ENCODE measurements at regions of chr14 and their contacts with region 1.

Region 1: DNA sequence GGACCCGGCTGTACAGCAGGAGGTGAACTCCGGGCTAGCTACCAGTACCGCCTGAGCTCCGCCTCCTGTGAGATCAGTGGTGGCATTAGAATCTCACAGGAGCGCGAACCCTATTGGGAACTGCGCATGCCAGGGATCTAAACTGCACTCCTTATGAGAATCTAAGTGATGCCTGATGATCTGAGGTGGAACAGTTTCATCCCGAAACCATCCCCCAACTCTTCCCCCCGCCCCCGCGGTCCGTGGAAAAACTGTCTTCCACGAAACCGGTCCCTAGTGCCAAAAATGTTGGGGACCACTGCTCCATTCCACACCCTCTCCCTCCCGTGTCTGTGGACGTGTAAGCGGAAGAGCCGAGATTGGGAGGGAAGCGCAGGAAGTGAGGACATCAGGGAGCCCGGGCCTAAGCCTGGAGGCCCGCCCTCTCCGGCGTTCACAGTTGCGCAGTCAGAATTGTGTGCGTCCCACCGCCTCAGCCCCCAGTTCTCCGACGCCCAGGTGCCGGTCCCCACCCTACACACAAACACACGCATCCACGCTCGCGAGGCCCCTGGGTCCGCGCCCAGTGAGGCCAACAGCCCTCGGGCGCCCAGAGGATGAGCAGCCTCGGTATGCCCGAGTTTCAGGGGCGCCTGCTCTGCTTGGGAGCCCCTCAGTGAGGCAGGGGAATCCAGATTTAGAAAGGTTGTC is 1.8 kb upstream of the RNASE4 start:
- DNase-seq: peak; percentile 78
- H3K4me3 Mint-ChIP-seq: no peak overlapping the region
- H3K27ac Mint-ChIP-seq: no peak overlapping the region
- H3K4me1 Mint-ChIP-seq: peaks cover 13% of the 10 kb centered on the region
- H3K27me3 Mint-ChIP-seq: no peaks in the 10 kb centered on the region

Region 2: DNA sequence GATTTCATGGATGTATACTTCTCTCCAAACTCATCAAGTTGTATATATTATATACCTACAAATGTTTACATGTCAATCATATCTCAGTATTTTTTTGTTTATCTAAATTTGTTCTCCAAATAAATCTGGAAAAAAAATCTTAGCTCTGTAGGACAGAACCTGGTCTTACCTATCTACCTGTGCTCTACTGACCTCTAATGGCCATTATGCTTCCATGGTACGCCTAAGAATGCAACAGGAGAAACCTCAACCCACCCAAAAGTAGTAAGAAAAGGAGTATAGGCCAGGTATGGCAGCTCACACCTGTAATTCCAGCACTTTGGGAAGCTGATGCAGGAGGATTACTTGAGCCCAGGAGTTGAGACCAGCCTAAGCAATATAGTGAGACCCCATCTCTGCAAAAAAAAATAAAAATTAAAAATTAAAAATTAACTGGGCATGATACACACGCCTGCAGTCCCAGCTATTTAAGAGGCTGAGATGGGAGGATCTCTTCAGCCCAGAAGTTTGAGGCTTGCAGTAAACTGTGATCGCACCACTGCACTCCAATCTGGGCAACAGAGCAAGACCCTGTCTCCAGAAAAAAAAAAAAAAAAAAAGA is 434.8 kb before region 1 on chr14:
- CTCF ChIA-PET with region 1: no interaction called
- POLR2A ChIA-PET with region 1: no interaction called
- DNase-seq: no peak
- H3K4me3 Mint-ChIP-seq: no peak overlapping the region
- H3K27ac Mint-ChIP-seq: no peak overlapping the region
- H3K4me1 Mint-ChIP-seq: no peaks in the 10 kb centered on the region
- H3K27me3 Mint-ChIP-seq: peaks cover 1% of the 10 kb centered on the region

Region 3: GRCh38 chr14:20652996-20653975 is 29.3 kb before region 1 on chr14:
- CTCF ChIA-PET with region 1: interaction called, 179 read pairs
- POLR2A ChIA-PET with region 1: interaction called, 31 read pairs
- DNase-seq: peak; percentile 63
- H3K4me3 Mint-ChIP-seq: peak overlapping the region; percentile 48
- H3K27ac Mint-ChIP-seq: no peak overlapping the region
- H3K4me1 Mint-ChIP-seq: peaks cover 30% of the 10 kb centered on the region
- H3K27me3 Mint-ChIP-seq: peaks cover 67% of the 10 kb centered on the region

Region 4: DNA sequence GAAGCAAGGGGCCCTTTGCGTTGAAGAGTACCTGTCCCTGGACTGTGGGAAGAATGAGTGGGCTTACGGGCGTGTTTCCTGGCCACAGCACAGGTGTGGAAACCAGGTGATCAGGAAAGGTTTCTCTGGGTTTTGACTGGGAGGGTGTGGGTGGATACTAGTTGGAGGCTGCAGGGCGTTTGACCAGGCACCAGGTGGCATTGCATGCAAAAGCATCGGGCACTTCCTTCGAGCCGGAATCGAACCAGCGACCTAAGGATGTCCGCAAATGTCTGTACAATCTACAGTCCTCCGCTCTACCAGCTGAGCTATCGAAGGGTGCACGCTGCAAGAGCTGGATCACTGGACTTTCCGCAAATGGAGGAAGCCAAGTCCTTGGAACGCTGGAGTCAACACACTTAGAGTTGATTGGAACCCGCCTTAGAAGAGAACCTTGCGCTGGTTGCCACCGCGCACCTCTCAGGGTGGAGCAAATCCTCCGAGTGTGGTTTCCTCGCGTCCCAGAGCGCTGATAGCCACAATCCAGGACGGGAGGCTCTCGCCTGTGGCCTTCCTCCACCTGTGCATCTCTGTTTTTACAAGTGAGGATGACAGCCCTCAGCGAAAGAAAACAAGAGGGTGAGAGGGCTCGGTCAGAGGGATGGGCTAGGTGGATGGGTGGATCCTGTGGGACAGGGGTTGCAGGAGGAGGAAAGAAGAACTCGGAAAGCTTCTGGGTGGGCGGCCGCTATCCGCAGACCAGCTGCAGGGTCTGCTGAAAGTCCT is 19.4 kb before region 1 on chr14:
- CTCF ChIA-PET with region 1: interaction called, 179 read pairs
- POLR2A ChIA-PET with region 1: interaction called, 69 read pairs
- DNase-seq: peak; percentile 87
- H3K4me3 Mint-ChIP-seq: peak overlapping the region; percentile 76
- H3K27ac Mint-ChIP-seq: peak overlapping the region; percentile 27
- H3K4me1 Mint-ChIP-seq: peaks cover 57% of the 10 kb centered on the region
- H3K27me3 Mint-ChIP-seq: peaks cover 7% of the 10 kb centered on the region

Measured in activated CD4-positive, alpha-beta memory T cell treated with anti-CD3 and anti-CD28 coated beads, Interleukin-2, amount 10 ng/mL, durations not matched to agents 7 days and 5 days (primary cell).